ENCODE measurements at regions of chr10 and their contacts with region 1.

Region 1: DNA sequence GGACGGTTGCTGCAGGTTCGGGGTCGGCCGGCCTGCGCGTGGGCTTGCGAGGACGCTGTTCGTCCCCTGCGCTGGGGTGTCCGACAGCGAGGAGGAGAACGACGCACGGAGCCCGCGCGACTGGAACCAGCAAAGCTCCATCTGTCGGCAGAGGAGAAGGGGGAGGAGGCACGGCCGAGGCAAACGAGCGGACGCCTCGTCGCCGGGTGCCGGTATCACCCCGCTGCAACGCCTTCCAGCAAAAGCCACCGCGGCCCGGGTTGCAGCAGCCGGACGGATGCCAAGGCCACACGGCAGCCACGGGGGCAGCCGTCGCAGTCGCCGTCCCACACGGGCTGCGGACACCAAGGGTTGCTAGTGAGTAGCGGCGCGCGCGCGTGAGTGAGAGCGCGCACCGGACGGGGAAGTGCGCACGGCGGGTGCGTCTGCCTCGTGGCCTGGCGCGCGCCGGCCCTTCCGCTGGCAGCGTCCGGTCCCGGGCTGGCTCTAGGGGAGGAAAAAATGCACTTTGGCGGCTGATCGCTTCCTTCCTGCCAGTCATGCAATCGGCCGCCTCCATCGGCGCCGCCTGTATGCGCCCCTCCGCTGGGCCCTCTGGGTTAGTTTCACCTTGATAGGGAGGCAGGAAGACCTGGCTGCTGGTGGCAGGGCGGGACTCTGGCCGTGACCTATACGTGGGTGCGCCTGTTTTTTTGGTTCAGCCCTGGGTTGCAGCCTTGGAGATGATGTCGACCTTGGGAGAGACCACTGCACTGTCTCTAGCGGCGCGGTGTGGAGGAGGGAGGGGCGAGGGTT is 434 bp downstream of the STAMBPL1 start:
- DNase-seq: peak; percentile 74 to 81 (median 78)
- H3K4me3 ChIP-seq: peak overlapping the region; percentile 70 to 71
- H3K4me3 Mint-ChIP-seq: peak overlapping the region; percentile 98 to 99 (median 99)
- H3K27ac ChIP-seq: peak overlapping the region; percentile 70
- H3K27ac Mint-ChIP-seq: peak overlapping the region; percentile 91 to 98 (median 96)
- H3K4me1 ChIP-seq: peaks cover 61% of the 10 kb centered on the region
- H3K4me1 Mint-ChIP-seq: peaks cover 48 to 78% (median 57%) of the 10 kb centered on the region in 4 donors
- H3K27me3 ChIP-seq: no peaks in the 10 kb centered on the region
- H3K27me3 Mint-ChIP-seq: no peaks in the 10 kb centered on the region

Region 2: GRCh38 chr10:88582806-88583583 is 297.5 kb before region 1 on chr10 and contains the start of gene RNLS:
- CTCF ChIA-PET with region 1: no interaction called
- POLR2A ChIA-PET with region 1: interaction called, 16 read pairs
- intact Hi-C with region 1: loop called (anchors 5 kb)
- DNase-seq: peak; percentile 60 to 73 (median 65)
- H3K4me3 ChIP-seq: peak within 1 kb of the TSS; percentile 72 to 89
- H3K4me3 Mint-ChIP-seq: peak within 1 kb of the TSS; percentile 91 to 96 (median 93)
- H3K27ac ChIP-seq: peak within 1 kb of the TSS; percentile 77
- H3K27ac Mint-ChIP-seq: peak within 1 kb of the TSS; percentile 78 to 96 (median 93)
- H3K4me1 ChIP-seq: peaks cover 7% of the 10 kb centered on the region
- H3K4me1 Mint-ChIP-seq: peaks cover 6 to 26% (median 14%) of the 10 kb centered on the region in 4 donors
- H3K27me3 ChIP-seq: no peaks in the 10 kb centered on the region
- H3K27me3 Mint-ChIP-seq: no peaks in the 10 kb centered on the region
- total RNA-seq, gene RNLS: 1.7 to 1.9 TPM

Region 3: GRCh38 chr10:88820748-88821389 is 59.6 kb before region 1 on chr10:
- CTCF ChIA-PET with region 1: no interaction called
- POLR2A ChIA-PET with region 1: interaction called, 38 read pairs
- intact Hi-C with region 1: no loop called
- DNase-seq: peak in 1 of 5 donors; percentile 28
- H3K4me3 ChIP-seq: no peak overlapping the region
- H3K4me3 Mint-ChIP-seq: peak overlapping the region in 2 of 8 donors; percentile 16 to 33
- H3K27ac ChIP-seq: no peak overlapping the region
- H3K27ac Mint-ChIP-seq: peak overlapping the region in 3 of 7 donors; percentile 6 to 61 (median 31)
- H3K4me1 ChIP-seq: peaks cover 35% of the 10 kb centered on the region
- H3K4me1 Mint-ChIP-seq: peaks cover 27 to 62% (median 47%) of the 10 kb centered on the region in 4 donors
- H3K27me3 ChIP-seq: no peaks in the 10 kb centered on the region
- H3K27me3 Mint-ChIP-seq: no peaks in the 10 kb centered on the region

Region 4: GRCh38 chr10:88865281-88865876 is 15.1 kb before region 1 on chr10:
- CTCF ChIA-PET with region 1: no interaction called
- POLR2A ChIA-PET with region 1: interaction called, 15 read pairs
- intact Hi-C with region 1: no loop called
- DNase-seq: no peak
- H3K4me3 ChIP-seq: no peak overlapping the region
- H3K4me3 Mint-ChIP-seq: no peak overlapping the region
- H3K27ac ChIP-seq: no peak overlapping the region
- H3K27ac Mint-ChIP-seq: no peak overlapping the region
- H3K4me1 ChIP-seq: no peaks in the 10 kb centered on the region
- H3K4me1 Mint-ChIP-seq: no peaks in the 10 kb centered on the region
- H3K27me3 ChIP-seq: no peaks in the 10 kb centered on the region
- H3K27me3 Mint-ChIP-seq: peaks cover 2 to 3% of the 10 kb centered on the region in 2 donors

Measured in CD4-positive, alpha-beta memory T cell (primary cell).